ENCODE measurements at regions of chr1 and their contacts with region 1.

Region 1: GRCh38 chr1:76074321-76075187 is at the start of gene ST6GALNAC3:
- DNase-seq: peak; percentile 41 to 88
- H3K4me3 ChIP-seq: peak within 1 kb of the TSS; percentile 58 to 74
- H3K27ac ChIP-seq: peak within 1 kb of the TSS; percentile 58 to 76
- H3K4me1 ChIP-seq: peaks cover 0 to 8% of the 10 kb centered on the region in 2 donors
- H3K27me3 ChIP-seq: no peaks in the 10 kb centered on the region
- CTCF ChIP-seq: no peak
- total RNA-seq, gene ST6GALNAC3: 34.5 TPM

Region 2: DNA sequence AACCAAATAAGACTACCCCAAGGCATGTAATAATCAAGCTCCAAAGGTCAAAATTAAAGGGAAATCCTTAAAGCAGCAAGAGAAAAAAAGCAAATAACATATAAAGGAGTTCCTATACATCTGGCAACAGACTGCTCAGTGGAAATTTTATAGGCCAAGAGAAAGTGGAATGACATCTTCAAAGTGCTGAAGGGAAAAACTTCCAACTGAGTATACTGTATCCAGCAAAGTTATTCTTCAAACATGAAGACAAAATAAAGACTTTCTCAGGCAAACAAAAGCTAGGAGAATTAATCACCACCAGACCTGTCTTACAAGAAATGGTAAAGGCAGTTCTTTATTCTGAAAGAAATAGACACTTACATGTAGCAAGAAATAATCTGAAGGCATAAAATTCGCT is 418.6 kb before region 1 on chr1:
- intact Hi-C with region 1: no loop called
- DNase-seq: no peak
- H3K4me3 ChIP-seq: no peak overlapping the region
- H3K27ac ChIP-seq: no peak overlapping the region
- H3K4me1 ChIP-seq: no peaks in the 10 kb centered on the region
- H3K27me3 ChIP-seq: no peaks in the 10 kb centered on the region
- CTCF ChIP-seq: no peak

Region 3: DNA sequence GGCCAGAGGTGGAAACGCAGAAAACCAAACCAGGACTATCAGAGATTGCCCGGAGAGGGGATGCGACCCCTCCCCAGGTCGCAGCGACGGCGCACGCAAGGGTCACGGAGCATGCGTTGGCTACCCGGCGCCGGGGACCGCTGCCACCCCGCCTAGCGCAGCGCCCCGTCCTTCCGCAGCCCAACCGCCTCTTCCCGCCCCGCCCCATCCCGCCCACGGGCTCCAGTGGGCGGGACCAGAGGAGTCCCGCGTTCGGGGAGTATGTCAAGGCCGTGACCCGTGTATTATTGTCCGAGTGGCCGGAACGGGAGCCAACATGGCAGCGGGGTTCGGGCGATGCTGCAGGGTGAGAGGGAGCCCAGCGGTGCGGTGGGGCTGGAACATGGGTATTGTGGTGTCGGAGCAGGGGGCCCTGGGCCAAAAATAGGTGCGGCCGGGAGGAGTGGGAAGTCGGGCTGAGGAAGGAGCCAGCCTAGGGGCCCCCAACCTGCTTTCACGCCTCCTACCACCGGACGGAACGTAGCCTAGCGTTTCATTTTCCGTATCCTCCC is 350.0 kb before region 1 on chr1 and contains the start of gene ACADM:
- intact Hi-C with region 1: loop called (anchors 10 kb)
- DNase-seq: peak; percentile 56 to 92
- H3K4me3 ChIP-seq: peak within 1 kb of the TSS; percentile 75 to 87
- H3K27ac ChIP-seq: peak within 1 kb of the TSS; percentile 84 to 89
- H3K4me1 ChIP-seq: peaks cover 0 to 4% of the 10 kb centered on the region in 2 donors
- H3K27me3 ChIP-seq: no peaks in the 10 kb centered on the region
- CTCF ChIP-seq: no peak
- total RNA-seq, gene ACADM: 9.8 TPM

Region 4: GRCh38 chr1:75785983-75786853 is 288.3 kb before region 1 on chr1 and contains the start of gene RABGGTB:
- intact Hi-C with region 1: loop called (anchors 10 kb)
- DNase-seq: peak; percentile 85 to 97
- H3K4me3 ChIP-seq: peak within 1 kb of the TSS; percentile 66 to 74
- H3K27ac ChIP-seq: peak within 1 kb of the TSS; percentile 88
- H3K4me1 ChIP-seq: peaks cover 10 to 19% of the 10 kb centered on the region in 2 donors
- H3K27me3 ChIP-seq: no peaks in the 10 kb centered on the region
- CTCF ChIP-seq: no peak
- total RNA-seq, gene RABGGTB: 17.7 TPM

Region 5: GRCh38 chr1:76425201-76426145 is 350.9 kb after region 1 on chr1:
- intact Hi-C with region 1: loop called (anchors 10 kb)
- DNase-seq: no peak
- H3K4me3 ChIP-seq: peak overlapping the region; percentile 26 to 55
- H3K27ac ChIP-seq: peak overlapping the region; percentile 55 to 57
- H3K4me1 ChIP-seq: peaks cover 0 to 26% of the 10 kb centered on the region in 2 donors
- H3K27me3 ChIP-seq: no peaks in the 10 kb centered on the region
- CTCF ChIP-seq: no peak

Region 6: DNA sequence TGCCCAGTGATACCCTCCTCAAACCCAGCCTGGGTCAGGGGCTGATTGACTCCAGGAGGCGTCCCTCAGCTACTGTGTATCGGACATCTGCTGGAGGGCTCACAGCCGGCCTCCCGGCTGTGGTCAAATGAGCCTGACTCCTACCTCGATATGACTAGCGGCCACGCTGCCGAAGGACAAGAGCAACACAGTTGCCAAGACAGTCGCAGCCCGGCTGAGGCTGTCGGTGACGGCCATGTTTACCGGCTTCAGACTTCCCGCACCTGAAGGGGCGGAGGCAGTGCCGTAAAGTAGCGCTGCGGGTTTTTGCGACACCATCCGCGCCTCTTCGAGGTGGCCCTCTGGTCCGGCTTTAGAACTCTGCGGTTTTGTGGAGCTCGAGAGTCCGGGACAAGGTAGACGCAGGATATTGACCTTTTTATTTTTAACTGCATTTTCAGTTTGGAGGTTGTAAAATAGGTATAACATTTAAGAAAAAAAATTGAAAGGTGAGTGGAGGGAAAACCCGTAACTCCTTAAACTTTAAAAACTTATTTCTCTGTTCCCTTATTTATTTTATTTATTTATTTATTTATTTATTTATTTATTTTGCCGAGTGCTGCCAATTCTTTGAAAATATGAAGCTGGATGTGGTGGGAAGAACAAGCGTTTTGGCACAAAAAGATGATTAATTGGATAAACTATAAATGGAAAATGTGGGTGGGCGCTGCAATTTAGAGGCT is 1144.8 kb after region 1 on chr1 and contains the start of gene PIGK:
- intact Hi-C with region 1: loop called (anchors 5 kb)
- DNase-seq: peak; percentile 29 to 90
- H3K4me3 ChIP-seq: peak within 1 kb of the TSS; percentile 75 to 79
- H3K27ac ChIP-seq: peak within 1 kb of the TSS; percentile 84 to 86
- H3K4me1 ChIP-seq: peaks cover 0 to 11% of the 10 kb centered on the region in 2 donors
- H3K27me3 ChIP-seq: no peaks in the 10 kb centered on the region
- CTCF ChIP-seq: no peak
- total RNA-seq, gene PIGK: 3.4 TPM

Region 7: DNA sequence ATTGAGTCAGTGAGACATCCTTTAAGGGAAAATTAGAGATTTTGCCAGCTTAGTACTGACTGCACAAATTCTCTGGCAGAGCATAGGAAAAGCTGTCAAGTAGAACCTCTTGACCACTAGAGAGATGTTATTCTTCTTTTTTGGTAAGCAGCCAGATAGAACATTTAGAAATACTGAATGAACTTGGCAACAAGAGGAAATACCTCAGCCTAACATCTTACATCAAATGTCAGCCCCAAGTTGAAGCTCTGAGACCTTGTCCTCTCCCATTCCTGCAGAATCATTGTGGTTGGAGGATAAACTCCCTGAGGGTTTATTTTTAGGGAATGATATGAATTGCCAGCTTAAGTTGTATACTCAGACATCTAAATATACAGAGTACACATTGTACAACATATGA is 1758.3 kb after region 1 on chr1:
- intact Hi-C with region 1: loop called (anchors 5 kb)
- DNase-seq: no peak
- H3K4me3 ChIP-seq: peak overlapping the region in 1 of 2 donors; percentile 35
- H3K27ac ChIP-seq: peak overlapping the region; percentile 83 to 93
- H3K4me1 ChIP-seq: peaks cover 3 to 55% of the 10 kb centered on the region in 2 donors
- H3K27me3 ChIP-seq: no peaks in the 10 kb centered on the region
- CTCF ChIP-seq: no peak

Measured in ascending aorta (tissue), 2 donors.